Gastrocnemius medialis (tissue), 4 donors: ENCODE measurements at regions of chr6 and their contacts with region 1.

Region 1: DNA sequence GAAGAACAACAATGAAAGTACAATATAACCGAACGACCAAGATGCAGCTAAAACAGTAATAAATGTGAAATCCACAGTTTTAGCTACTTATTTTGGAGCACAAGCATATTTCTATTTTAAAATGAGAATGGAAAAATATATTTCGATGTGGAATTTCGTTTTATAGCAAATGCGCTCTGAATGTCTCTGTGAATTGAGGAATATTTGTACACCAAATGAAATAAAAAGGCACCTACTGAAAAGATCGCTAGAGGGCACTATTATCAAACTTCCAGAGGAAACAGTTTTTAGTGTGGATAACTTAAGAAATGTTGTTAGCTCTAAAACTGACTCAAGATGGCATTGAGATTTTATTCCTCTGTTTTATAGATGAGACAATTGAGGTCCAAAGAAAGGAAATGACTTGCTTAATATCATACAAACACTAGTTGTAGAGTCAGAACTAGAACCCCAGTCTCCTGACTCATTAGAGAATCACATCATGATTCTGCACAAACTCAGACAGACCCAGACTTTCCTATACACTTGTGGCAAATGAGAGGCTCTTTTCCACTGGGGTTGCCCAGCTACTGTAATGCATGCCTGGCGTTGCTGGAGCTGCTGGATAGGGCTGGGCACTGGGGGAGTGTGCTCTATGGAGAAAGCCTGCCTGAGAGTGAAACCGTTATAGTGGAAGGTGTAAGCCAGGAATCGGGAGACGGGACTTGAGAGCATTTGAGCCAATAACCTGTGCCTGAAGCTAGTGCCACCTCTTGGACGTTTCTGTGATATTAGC is 51.9 kb downstream of the GCLC start:
- DNase-seq: peak in 1 of 2 donors; percentile 24
- ATAC-seq: peak; percentile 72 to 91
- H3K4me3 ChIP-seq: peak overlapping the region; percentile 29 to 54 (median 36)
- H3K27ac ChIP-seq: peak overlapping the region; percentile 36 to 76 (median 39)
- H3K4me1 ChIP-seq: peaks cover 5 to 9% of the 10 kb centered on the region in 2 donors
- H3K27me3 ChIP-seq: no peaks in the 10 kb centered on the region
- CTCF ChIP-seq: peak; percentile 26 to 78 (median 71)
- POLR2A ChIP-seq: no peak

Region 2: DNA sequence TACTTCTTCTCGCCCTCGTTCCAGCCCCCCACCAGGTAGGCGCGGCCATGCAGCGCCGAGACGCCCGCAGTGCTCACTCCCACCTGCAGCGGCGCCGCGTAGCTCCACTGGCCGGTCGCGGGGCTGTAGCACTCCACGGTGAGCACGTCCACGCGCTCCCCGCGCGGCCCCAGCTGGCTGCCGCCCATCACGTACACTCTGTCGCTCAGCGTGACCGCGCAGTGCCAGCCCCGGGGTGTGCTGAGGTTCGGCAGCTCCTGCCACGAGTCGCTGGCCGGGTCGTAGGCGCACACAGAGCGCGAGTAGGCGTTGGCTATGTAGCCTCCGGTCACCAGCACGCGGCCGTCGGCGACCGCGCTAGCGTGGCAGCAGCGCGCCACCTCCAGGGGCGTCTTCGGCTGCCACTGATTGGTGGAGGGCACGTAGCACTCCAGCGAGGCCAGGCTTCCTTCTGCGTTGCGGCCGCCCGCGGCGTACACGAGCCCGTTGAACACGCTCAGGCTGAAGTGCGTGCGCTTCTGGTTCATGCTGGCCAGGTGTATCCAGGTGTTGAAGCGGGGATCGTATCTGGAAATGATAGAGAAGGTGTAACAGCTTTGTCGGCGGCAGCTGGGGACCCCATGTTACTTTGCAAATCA is 158.8 kb after region 1 on chr6:
- in situ Hi-C with region 1: loop called in 2 of 4 experiments (anchors 5 to 10 kb)
- intact Hi-C with region 1: loop called (anchors 1 kb)
- DNase-seq: peak; percentile 63 to 85
- ATAC-seq: peak; percentile 84 to 86
- H3K4me3 ChIP-seq: peak overlapping the region; percentile 59 to 65 (median 63)
- H3K27ac ChIP-seq: peak overlapping the region; percentile 79 to 92 (median 89)
- H3K4me1 ChIP-seq: peaks cover 48 to 72% of the 10 kb centered on the region in 2 donors
- H3K27me3 ChIP-seq: no peaks in the 10 kb centered on the region
- CTCF ChIP-seq: peak in 4 of 5 experiments; percentile 33 to 46 (median 36)
- POLR2A ChIP-seq: peak; percentile 17 to 57

Region 3: DNA sequence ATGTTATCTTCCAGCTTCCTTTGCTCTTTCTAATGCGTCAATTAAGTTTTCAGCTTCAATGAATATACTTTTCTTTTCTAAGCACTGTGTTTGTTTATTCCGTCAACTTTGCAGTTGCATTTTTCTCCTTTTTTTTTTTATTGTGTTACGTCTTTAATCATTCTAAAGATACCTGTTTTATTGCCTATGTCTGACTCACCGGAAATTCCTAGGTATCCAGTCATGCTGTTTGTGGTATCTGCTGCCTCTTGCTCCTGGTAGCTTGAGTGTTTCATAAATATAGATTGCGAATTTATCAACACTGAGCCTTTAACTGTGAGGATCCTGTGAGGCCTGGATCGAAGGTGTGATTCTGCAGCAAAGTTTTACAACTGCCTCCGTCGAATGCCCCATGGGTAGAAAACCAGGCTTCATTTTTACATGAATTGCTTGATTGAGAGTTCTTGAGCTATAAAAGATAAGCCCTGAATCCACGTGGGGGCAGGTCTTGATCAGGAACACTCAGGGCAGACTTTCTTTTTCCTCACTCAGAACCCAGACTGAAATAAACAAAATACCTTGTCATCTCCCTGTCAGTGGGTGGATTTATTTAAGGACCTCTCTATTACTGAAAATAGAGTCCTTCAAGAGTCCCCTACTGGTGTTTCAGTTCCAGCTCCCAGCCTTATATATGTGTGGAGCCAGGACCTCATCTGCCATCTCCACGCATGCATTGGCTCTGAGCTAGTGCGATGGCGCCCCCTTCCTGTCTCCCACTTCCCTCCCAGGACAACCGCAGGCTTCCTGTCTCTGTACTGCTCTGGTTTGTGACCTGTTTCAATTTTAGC is 241.6 kb after region 1 on chr6:
- in situ Hi-C with region 1: loop called (anchors 5 to 10 kb)
- intact Hi-C with region 1: no loop called
- DNase-seq: no peak
- ATAC-seq: no peak
- H3K4me3 ChIP-seq: no peak overlapping the region
- H3K27ac ChIP-seq: no peak overlapping the region
- H3K4me1 ChIP-seq: no peaks in the 10 kb centered on the region
- H3K27me3 ChIP-seq: no peaks in the 10 kb centered on the region
- CTCF ChIP-seq: peak in 1 of 5 experiments; percentile 7
- POLR2A ChIP-seq: no peak